ENCODE measurements at regions of chr6 and their contacts with region 1.

Region 1: GRCh38 chr6:137094411-137095008 is 49.7 kb upstream of the IL20RA start:
- DNase-seq: peak; percentile 22
- H3K4me3 ChIP-seq: no peak overlapping the region
- H3K27ac ChIP-seq: no peak overlapping the region
- H3K4me1 ChIP-seq: peaks cover 19% of the 10 kb centered on the region
- H3K27me3 ChIP-seq: no peaks in the 10 kb centered on the region
- CTCF ChIP-seq: peak; percentile 86

Region 2: GRCh38 chr6:137191670-137192069 is 97.2 kb after region 1 on chr6:
- intact Hi-C with region 1: loop called (anchors 10 kb)
- DNase-seq: no peak
- H3K4me3 ChIP-seq: no peak overlapping the region
- H3K27ac ChIP-seq: peak overlapping the region; percentile 66
- H3K4me1 ChIP-seq: peaks cover 46% of the 10 kb centered on the region
- H3K27me3 ChIP-seq: no peaks in the 10 kb centered on the region
- CTCF ChIP-seq: no peak

Region 3: DNA sequence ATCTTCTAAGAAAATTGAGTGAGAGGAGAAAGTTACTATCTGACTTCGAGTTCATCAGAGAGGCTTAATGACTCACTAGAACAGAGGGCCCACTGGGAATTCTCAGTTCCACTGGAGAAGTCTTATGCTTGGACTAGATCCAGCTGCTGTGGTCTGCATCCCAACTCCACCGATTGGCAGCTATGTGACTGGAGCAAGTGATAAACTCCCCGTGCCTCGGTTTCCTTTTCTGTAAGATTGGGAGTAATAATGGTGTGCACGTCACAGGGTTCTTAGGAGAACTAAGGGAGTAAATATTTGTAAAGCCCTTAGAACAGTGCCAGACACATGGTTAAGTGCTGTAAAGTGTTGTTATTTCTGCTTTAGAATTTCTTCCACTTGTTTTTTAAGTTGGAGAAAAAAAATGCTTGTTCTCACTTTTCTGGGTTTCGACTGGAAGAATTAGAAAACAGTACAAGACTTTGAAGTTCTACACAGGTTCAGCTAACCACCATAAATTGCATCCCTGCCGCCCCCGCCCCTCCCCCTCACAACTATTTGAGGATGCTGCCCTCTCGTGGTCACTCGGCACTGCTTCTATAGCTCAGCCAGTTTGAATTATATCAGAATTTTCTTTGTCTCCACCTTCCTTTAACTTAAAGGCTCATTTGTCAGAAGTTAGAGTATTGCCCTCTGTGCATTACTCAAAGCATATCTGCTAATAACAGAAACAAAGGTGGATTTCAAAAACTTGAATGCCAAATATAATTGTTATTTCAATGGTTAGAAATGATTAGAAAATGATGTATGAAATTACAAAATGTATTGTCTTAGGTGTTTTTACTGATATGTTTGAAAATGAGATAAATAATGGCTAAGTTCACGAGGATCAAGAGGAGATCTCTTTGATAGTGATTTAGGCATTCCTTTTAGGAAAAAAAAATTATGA is 219.7 kb after region 1 on chr6:
- intact Hi-C with region 1: loop called (anchors 2 kb)
- DNase-seq: peak; percentile 75
- H3K4me3 ChIP-seq: peak overlapping the region; percentile 49
- H3K27ac ChIP-seq: peak overlapping the region; percentile 33
- H3K4me1 ChIP-seq: peaks cover 13% of the 10 kb centered on the region
- H3K27me3 ChIP-seq: no peaks in the 10 kb centered on the region
- CTCF ChIP-seq: peak; percentile 84

Region 4: GRCh38 chr6:137641474-137642077 is 547.1 kb after region 1 on chr6:
- intact Hi-C with region 1: loop called (anchors 10 kb)
- DNase-seq: peak; percentile 45
- H3K4me3 ChIP-seq: no peak overlapping the region
- H3K27ac ChIP-seq: no peak overlapping the region
- H3K4me1 ChIP-seq: peaks cover 6% of the 10 kb centered on the region
- H3K27me3 ChIP-seq: no peaks in the 10 kb centered on the region
- CTCF ChIP-seq: peak; percentile 77